Posterior vena cava (tissue), 2 donors: ENCODE measurements at regions of chr13 and their contacts with region 1.

Region 1: DNA sequence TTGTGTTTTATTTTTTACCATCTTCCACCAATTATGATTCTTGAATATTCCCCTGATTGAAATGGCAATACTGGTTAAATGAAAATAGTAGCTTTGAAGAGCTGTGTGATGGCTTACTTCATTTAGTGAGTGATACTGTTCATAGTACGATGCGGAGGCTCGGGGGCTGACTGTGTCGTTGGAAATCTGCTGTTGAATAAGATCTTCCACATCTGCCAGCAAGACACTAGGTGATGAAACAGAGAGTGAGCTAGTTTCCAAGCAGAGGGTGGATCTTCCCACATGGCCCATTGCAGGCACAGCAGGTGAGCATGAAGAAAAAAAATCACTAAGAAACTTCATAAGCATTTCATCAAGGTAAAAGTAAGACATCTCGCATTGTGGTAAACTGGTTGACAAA is 22.5 kb downstream of the CPB2 start:
- DNase-seq: no peak

Region 2: GRCh38 chr13:46045460-46045859 is 36.9 kb before region 1 on chr13:
- intact Hi-C with region 1: loop called in 1 of 2 experiments (anchors 2 kb)
- DNase-seq: no peak

Region 3: DNA sequence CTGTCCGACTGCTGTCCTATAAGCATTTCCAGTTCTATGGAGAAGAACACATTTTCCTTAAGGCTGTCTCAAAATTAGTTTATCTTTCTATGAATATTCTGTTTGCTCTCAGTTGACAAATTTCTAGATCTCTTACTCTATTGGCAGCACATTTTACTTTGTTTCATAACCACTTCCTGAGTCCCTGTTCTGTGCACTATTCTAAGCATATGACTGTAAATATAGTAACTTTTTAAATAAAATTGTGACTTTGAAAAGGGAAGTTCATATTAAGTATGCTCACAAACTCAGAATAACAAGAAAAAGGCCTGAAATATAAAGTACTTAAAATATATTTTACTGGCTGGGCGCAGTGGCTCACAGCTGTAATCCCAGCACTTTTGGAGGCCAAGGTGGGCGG is 871.0 kb after region 1 on chr13:
- intact Hi-C with region 1: no loop called
- DNase-seq: no peak